Ascending aorta (tissue), 2 donors: ENCODE measurements at regions of chr10 and their contacts with region 1.

Region 1: GRCh38 chr10:125093199-125093973 is 67.0 kb downstream of the CTBP2 start:
- DNase-seq: peak in 1 of 2 donors; percentile 85
- H3K4me3 ChIP-seq: peak overlapping the region in 1 of 2 donors; percentile 5
- H3K27ac ChIP-seq: peak overlapping the region; percentile 52 to 79
- H3K4me1 ChIP-seq: peaks cover 3 to 46% of the 10 kb centered on the region in 2 donors
- H3K27me3 ChIP-seq: no peaks in the 10 kb centered on the region
- CTCF ChIP-seq: no peak

Region 2: DNA sequence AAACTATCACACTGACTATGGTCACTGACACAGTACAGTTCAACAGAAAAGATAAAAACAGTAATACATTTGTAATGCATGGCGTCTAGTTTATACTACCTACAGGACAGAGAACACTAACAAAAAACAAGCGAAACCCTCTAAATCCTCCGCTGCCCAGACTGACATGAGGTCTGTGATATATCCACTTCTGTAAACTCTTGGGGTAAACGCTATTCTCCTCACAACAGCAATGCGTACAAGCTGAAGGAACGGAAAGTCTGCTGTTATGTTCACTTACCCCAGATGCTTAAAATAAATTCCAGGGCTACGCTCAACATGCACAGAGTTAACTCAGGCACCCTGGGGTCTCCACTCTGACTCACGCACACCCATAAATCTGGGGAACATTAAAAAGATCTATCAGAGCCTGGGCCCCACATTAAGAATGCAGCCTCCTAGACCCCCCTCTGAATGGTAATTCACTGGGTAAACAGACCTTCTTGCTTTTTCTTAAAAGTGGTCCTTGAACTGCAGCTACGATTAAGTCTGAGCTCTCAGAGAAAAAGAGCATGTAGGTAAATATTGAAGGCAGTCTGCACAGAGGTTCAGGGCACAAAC is 38.6 kb before region 1 on chr10:
- intact Hi-C with region 1: loop called (anchors 5 kb)
- DNase-seq: no peak
- H3K4me3 ChIP-seq: peak overlapping the region in 1 of 2 donors; percentile 19
- H3K27ac ChIP-seq: peak overlapping the region; percentile 99
- H3K4me1 ChIP-seq: peaks cover 41 to 70% of the 10 kb centered on the region in 2 donors
- H3K27me3 ChIP-seq: no peaks in the 10 kb centered on the region
- CTCF ChIP-seq: no peak